ENCODE measurements at regions of chr19 and their contacts with region 1.

Region 1: DNA sequence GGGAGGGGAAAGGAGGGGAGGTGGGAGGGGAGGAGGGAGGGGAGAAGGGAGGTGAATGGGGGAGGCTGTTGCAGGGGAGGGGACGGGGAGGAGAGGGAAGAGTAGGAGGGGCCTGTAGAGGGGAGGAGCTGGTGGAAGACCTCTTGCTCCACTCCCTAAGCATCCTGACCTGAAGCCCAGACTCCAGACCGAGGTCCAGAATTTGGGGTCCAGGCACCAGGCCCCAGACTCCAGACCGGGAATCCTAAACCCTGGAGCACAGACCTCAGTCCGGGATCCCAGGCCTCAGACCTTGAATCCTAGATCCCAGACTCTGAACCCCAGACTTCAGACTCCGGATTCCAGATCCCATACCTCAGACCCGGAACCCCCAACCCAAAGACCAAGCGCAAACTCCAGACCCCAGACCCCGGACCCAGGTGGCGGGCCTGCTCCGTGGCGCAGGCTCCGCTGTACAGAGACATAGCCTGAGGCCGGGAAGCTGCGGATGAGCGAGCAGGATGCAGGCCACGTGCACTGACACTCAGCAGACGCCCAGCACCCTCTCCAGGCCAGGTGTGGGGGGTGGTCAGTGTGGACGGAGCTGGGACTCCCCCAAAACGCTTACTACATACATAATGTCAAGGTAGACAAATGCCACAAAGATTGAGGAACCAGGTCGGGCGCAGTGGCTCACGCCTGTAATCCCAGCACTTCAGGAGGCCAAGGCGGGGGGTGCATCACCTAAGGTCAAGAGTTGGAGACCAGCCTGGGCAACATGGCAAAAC is 710 bp upstream of the BTBD2 start:
- DNase-seq: peak; percentile 66 to 85
- ATAC-seq: peak; percentile 68 to 91 (median 86)
- H3K4me3 ChIP-seq: peak overlapping the region in 8 of 10 donors; percentile 4 to 49 (median 42)
- H3K27ac ChIP-seq: peak overlapping the region in 8 of 10 donors; percentile 4 to 68 (median 50)
- H3K4me1 ChIP-seq: peaks cover 4 to 24% (median 9%) of the 10 kb centered on the region in 9 donors
- H3K27me3 ChIP-seq: no peaks in the 10 kb centered on the region
- CTCF ChIP-seq: no peak

Region 2: GRCh38 chr19:1956868-1957492 is 59.2 kb before region 1 on chr19:
- intact Hi-C with region 1: no loop called
- DNase-seq: no peak
- ATAC-seq: peak; percentile 22 to 87 (median 58)
- H3K4me3 ChIP-seq: no peak overlapping the region
- H3K27ac ChIP-seq: no peak overlapping the region
- H3K4me1 ChIP-seq: peaks cover 0 to 7% (median 0%) of the 10 kb centered on the region in 9 donors
- H3K27me3 ChIP-seq: no peaks in the 10 kb centered on the region
- CTCF ChIP-seq: no peak

Region 3: GRCh38 chr19:2050991-2051772 is 35.0 kb after region 1 on chr19 and contains the start of gene MKNK2:
- intact Hi-C with region 1: loop called in 1 of 10 experiments (anchors 5 kb)
- DNase-seq: peak; percentile 91 to 96
- ATAC-seq: peak; percentile 62 to 84 (median 78)
- H3K4me3 ChIP-seq: peak within 1 kb of the TSS; percentile 92 to 100 (median 98)
- H3K27ac ChIP-seq: peak within 1 kb of the TSS; percentile 90 to 100 (median 96)
- H3K4me1 ChIP-seq: peaks cover 56 to 87% (median 78%) of the 10 kb centered on the region in 9 donors
- H3K27me3 ChIP-seq: no peaks in the 10 kb centered on the region
- CTCF ChIP-seq: peak; percentile 9 to 79 (median 69)
- total RNA-seq, gene MKNK2: 107 to 260 (median 144) TPM

Region 4: GRCh38 chr19:2096480-2097329 is 80.5 kb after region 1 on chr19 and contains the start of gene IZUMO4:
- intact Hi-C with region 1: loop called in 1 of 10 experiments (anchors 1 kb)
- DNase-seq: peak; percentile 98 to 100
- ATAC-seq: peak; percentile 88 to 94 (median 90)
- H3K4me3 ChIP-seq: peak within 1 kb of the TSS; percentile 50 to 95 (median 78)
- H3K27ac ChIP-seq: peak within 1 kb of the TSS; percentile 79 to 98 (median 93)
- H3K4me1 ChIP-seq: peaks cover 13 to 54% (median 41%) of the 10 kb centered on the region in 9 donors
- H3K27me3 ChIP-seq: no peaks in the 10 kb centered on the region
- CTCF ChIP-seq: peak in 8 of 9 donors; percentile 13 to 67 (median 44)
- total RNA-seq, gene IZUMO4: 1.2 to 6.5 (median 2.2) TPM